Calu3 (cell line): ENCODE measurements at regions of chr13 and their contacts with region 1.

Region 1: DNA sequence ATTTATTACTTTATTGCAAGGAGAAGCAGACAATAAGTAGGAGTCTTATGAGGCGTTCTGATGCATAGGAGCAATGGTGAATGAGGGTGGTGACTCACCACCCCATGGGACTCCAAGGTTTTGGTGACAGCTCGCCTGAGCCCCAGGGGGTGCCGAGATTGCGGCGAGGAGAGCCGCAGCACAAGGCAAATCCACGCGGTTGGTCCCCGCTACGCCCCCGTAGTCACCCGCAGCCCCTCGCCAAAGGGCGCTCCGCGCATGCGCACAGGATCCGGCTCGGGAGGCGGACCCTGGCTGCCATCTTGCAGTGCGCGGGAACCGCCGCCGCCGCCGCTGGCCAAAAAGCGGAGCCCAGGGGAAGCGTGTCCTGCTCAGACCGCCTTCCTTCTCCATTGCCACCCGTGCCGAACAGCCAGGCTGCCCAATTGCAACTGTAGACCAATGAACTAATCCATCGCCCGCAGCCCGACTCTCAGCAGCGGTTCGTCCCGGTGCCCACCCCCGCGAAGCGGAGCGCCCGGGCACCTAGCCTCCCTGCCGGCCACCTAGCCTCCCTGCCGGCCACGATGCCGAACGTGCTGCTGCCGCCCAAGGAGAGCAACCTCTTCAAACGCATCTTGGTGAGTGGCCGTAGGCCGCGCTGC is at the start of gene NAA16:
- DNase-seq: peak; percentile 88
- H3K4me3 Mint-ChIP-seq: peak within 1 kb of the TSS; percentile 85
- H3K27ac Mint-ChIP-seq: peak within 1 kb of the TSS; percentile 84
- H3K4me1 Mint-ChIP-seq: peaks cover 25% of the 10 kb centered on the region
- H3K27me3 Mint-ChIP-seq: no peaks in the 10 kb centered on the region
- CTCF ChIP-seq: no peak
- total RNA-seq, gene NAA16: 23.7 and 27.0 TPM in 2 replicates

Region 2: GRCh38 chr13:41061075-41061913 is 249.8 kb before region 1 on chr13 and contains the start of gene WBP4:
- CTCF ChIA-PET with region 1: no interaction called
- intact Hi-C with region 1: loop called (anchors 5 kb)
- DNase-seq: peak; percentile 89
- H3K4me3 Mint-ChIP-seq: peak within 1 kb of the TSS; percentile 71
- H3K27ac Mint-ChIP-seq: peak within 1 kb of the TSS; percentile 80
- H3K4me1 Mint-ChIP-seq: peaks cover 24% of the 10 kb centered on the region
- H3K27me3 Mint-ChIP-seq: no peaks in the 10 kb centered on the region
- CTCF ChIP-seq: no peak
- total RNA-seq, gene WBP4: 7.2 and 7.6 TPM in 2 replicates

Region 3: GRCh38 chr13:41231786-41232185 is 79.3 kb before region 1 on chr13:
- CTCF ChIA-PET with region 1: interaction called, 3 read pairs
- intact Hi-C with region 1: loop called (anchors 10 kb)
- DNase-seq: peak; percentile 54
- H3K4me3 Mint-ChIP-seq: peak overlapping the region; percentile 17
- H3K27ac Mint-ChIP-seq: peak overlapping the region; percentile 8
- H3K4me1 Mint-ChIP-seq: peaks cover 23% of the 10 kb centered on the region
- H3K27me3 Mint-ChIP-seq: no peaks in the 10 kb centered on the region
- CTCF ChIP-seq: no peak

Region 4: DNA sequence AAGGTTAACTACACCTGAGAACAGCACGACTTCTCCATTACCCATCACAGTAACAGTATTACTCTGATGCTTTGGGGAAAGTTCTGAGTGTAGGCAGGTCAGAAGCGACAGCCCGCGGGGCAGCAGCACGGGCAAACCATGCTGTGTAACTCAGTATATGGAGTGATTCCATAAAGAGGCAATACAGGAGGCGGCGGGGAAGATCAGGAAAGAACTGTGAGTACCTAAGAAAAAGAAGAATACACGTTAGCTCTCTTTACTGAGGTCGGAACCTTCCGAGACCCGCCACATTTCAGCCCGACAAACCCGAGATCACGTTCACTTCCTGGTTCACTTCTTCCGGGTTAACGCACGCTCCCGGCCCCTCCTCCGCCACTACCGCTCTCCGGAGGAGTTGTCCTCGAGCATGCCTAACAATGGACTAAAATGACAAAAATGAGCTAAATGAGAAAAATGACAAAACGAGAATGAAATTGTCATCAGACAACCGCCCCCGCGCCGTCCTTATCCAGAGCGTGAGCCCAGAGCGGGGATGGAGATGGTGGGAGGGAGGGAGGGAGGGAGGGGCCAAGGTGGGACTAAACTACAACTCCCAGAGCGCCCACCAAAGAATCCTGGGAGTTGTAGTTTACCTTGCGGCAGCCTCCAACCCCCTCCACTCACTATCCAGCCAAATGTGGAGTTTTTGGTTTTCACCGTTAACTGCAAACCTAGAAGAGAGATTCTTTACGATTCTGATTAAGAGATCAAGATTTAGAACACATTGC is 47.6 kb before region 1 on chr13 and contains the start of gene MTRF1:
- CTCF ChIA-PET with region 1: no interaction called
- intact Hi-C with region 1: loop called (anchors 5 kb)
- DNase-seq: peak; percentile 61
- H3K4me3 Mint-ChIP-seq: peak within 1 kb of the TSS; percentile 93
- H3K27ac Mint-ChIP-seq: peak within 1 kb of the TSS; percentile 86
- H3K4me1 Mint-ChIP-seq: no peaks in the 10 kb centered on the region
- H3K27me3 Mint-ChIP-seq: no peaks in the 10 kb centered on the region
- CTCF ChIP-seq: no peak
- total RNA-seq, gene MTRF1: 15.8 and 17.3 TPM in 2 replicates

Region 5: DNA sequence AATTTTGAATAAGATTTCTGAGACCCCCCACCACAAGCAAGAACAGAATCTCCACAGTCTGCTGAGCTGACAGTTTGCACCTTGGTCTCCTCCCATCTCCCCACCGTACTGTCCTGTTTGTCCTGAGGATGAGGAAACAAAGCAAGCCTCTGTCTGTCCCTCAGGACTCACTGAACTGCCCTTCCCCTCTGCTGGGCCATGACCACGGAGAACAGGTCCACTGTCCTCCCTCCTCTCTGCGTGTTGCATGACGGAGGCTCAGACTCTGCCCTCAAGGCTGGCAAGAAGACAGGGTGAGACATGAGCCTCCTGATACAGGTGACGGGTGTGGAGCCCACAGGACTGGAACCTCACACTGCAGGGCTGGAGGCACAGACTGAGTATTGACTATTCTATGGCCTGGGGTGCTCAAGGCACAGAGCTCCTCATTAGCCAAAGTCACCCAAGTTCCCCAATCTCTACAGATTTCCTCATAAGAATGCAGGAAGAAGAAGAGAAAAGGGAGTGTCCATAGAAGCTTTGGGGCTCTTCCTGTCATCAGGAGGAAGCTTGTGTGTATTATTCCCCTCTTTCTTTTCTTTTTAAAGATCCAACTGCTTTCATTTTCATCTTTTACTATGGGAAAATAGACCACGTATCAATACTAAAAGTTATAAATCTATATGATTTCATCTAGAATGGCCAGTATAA is 123.9 kb after region 1 on chr13:
- CTCF ChIA-PET with region 1: no interaction called
- intact Hi-C with region 1: no loop called
- DNase-seq: no peak
- H3K4me3 Mint-ChIP-seq: no peak overlapping the region
- H3K27ac Mint-ChIP-seq: no peak overlapping the region
- H3K4me1 Mint-ChIP-seq: no peaks in the 10 kb centered on the region
- H3K27me3 Mint-ChIP-seq: peaks cover 6% of the 10 kb centered on the region
- CTCF ChIP-seq: no peak